Activated B cell treated with CpG ODN at 0.5 μM for 24 hours (primary cell): ENCODE measurements at regions of chr3 and their contacts with region 1.

Region 1: GRCh38 chr3:190883973-190884832 is 21.7 kb upstream of the GMNC start:
- DNase-seq: no peak
- ATAC-seq: no peak
- H3K4me3 Mint-ChIP-seq: no peak overlapping the region
- H3K27ac Mint-ChIP-seq: no peak overlapping the region
- H3K4me1 Mint-ChIP-seq: no peaks in the 10 kb centered on the region
- H3K27me3 Mint-ChIP-seq: peaks cover 7% of the 10 kb centered on the region
- CTCF ChIP-seq: peak; percentile 90

Region 2: GRCh38 chr3:190848870-190849269 is 35.3 kb before region 1 on chr3:
- CTCF ChIA-PET with region 1: no interaction called
- POLR2A ChIA-PET with region 1: no interaction called
- intact Hi-C with region 1: no loop called
- DNase-seq: no peak
- ATAC-seq: no peak
- H3K4me3 Mint-ChIP-seq: no peak overlapping the region
- H3K27ac Mint-ChIP-seq: no peak overlapping the region
- H3K4me1 Mint-ChIP-seq: no peaks in the 10 kb centered on the region
- H3K27me3 Mint-ChIP-seq: peaks cover 2% of the 10 kb centered on the region
- CTCF ChIP-seq: no peak

Region 3: GRCh38 chr3:191020730-191021396 is 136.7 kb after region 1 on chr3:
- CTCF ChIA-PET with region 1: no interaction called
- POLR2A ChIA-PET with region 1: no interaction called
- intact Hi-C with region 1: no loop called
- DNase-seq: no peak
- ATAC-seq: no peak
- H3K4me3 Mint-ChIP-seq: no peak overlapping the region
- H3K27ac Mint-ChIP-seq: no peak overlapping the region
- H3K4me1 Mint-ChIP-seq: no peaks in the 10 kb centered on the region
- H3K27me3 Mint-ChIP-seq: peaks cover 8% of the 10 kb centered on the region
- CTCF ChIP-seq: no peak

Region 4: DNA sequence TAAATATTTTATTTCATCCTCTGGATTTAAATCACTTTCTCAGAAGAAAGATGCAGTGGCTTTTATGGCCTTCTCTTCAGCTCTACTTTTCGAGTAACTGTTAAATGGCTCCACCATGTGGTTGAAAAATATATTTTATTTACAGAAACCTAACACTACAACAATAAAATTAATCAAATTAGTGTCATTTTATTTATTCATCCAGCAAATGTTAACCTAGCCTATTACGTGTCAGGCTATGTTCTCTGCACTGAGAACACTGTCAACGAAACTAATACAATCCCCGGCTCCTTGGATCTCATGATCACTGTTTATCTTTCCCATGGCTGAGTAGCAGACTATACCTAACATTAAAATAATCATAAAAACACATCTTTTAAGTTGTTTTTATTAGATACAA is 166.8 kb after region 1 on chr3:
- CTCF ChIA-PET with region 1: interaction called, 7 read pairs
- POLR2A ChIA-PET with region 1: no interaction called
- intact Hi-C with region 1: loop called (anchors 2 kb)
- DNase-seq: no peak
- ATAC-seq: no peak
- H3K4me3 Mint-ChIP-seq: no peak overlapping the region
- H3K27ac Mint-ChIP-seq: no peak overlapping the region
- H3K4me1 Mint-ChIP-seq: no peaks in the 10 kb centered on the region
- H3K27me3 Mint-ChIP-seq: peaks cover 2% of the 10 kb centered on the region
- CTCF ChIP-seq: no peak

Region 5: GRCh38 chr3:191235331-191236314 is 351.4 kb after region 1 on chr3:
- CTCF ChIA-PET with region 1: no interaction called
- POLR2A ChIA-PET with region 1: no interaction called
- intact Hi-C with region 1: loop called (anchors 10 kb)
- DNase-seq: no peak
- ATAC-seq: peak; percentile 88
- H3K4me3 Mint-ChIP-seq: no peak overlapping the region
- H3K27ac Mint-ChIP-seq: no peak overlapping the region
- H3K4me1 Mint-ChIP-seq: peaks cover 41% of the 10 kb centered on the region
- H3K27me3 Mint-ChIP-seq: no peaks in the 10 kb centered on the region
- CTCF ChIP-seq: no peak

Region 6: DNA sequence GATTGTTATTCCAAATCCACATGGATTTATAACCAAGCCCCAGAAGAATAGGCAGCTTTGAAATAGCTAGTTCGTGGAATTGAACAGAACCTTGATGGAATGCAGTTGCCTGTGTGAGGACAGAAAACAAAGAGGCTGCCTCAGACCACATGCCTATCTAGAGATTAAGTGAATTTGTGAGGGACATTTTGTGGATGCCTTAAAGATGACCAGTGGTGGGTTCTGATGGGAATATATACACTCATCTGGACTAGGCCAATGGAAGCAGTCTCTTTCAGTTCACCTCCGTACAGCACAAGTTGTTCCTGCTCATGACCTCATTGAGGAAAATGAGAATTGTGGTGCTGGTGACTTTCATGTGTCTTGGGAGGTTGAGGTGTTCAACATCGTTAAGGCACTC is 513.6 kb after region 1 on chr3:
- CTCF ChIA-PET with region 1: no interaction called
- POLR2A ChIA-PET with region 1: no interaction called
- intact Hi-C with region 1: loop called (anchors 5 kb)
- DNase-seq: no peak
- ATAC-seq: no peak
- H3K4me3 Mint-ChIP-seq: no peak overlapping the region
- H3K27ac Mint-ChIP-seq: no peak overlapping the region
- H3K4me1 Mint-ChIP-seq: no peaks in the 10 kb centered on the region
- H3K27me3 Mint-ChIP-seq: no peaks in the 10 kb centered on the region
- CTCF ChIP-seq: no peak